ENCODE measurements at regions of chr7 and their contacts with region 1.

Region 1: GRCh38 chr7:50467817-50468610 is 17.9 kb upstream of the FIGNL1 start:
- ATAC-seq: peak; percentile 90 to 98 (median 92)
- H3K4me3 ChIP-seq: no peak overlapping the region
- H3K27ac ChIP-seq: no peak overlapping the region
- H3K4me1 ChIP-seq: no peaks in the 10 kb centered on the region

Region 2: GRCh38 chr7:50166997-50167965 is 300.7 kb before region 1 on chr7:
- in situ Hi-C with region 1: no loop called
- ATAC-seq: no peak
- H3K4me3 ChIP-seq: no peak overlapping the region
- H3K27ac ChIP-seq: no peak overlapping the region
- H3K4me1 ChIP-seq: no peaks in the 10 kb centered on the region

Region 3: DNA sequence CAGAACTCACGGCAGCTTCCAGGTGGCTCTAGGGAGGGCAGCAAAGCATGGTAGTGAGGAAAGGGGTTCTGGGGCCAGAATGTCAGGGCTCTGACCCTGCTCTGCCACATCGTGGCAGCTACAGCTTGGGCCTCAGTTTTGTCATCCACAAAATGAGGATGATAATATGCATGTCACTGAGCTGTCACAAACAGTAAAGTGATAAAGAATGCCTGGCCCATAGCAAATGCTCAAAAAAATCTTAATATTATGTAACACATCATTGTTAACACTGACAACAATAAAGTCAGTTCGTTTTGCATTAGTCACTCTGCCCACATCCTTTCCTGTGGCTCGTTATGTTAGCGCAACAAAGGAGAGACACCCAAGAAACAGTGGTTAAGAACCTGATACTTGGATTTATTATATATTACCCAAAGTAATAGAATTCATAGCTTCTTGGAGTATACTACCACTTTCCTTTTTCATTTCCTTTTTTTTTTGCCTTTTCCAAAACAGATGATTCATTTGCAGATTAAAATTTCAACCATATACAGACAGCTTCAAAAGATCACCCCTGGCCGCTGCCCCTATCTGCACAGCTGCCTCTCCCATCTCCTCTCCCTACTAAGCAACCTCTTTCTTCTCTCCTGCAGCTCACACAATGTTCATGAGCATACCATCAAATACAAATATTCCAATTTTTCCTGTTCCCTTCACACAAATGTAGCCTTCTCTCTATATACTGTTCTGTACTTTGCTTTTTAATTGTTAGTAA is 142.7 kb after region 1 on chr7:
- in situ Hi-C with region 1: loop called in 1 of 9 experiments (anchors 25 kb)
- ATAC-seq: no peak
- H3K4me3 ChIP-seq: no peak overlapping the region
- H3K27ac ChIP-seq: no peak overlapping the region
- H3K4me1 ChIP-seq: no peaks in the 10 kb centered on the region

Region 4: DNA sequence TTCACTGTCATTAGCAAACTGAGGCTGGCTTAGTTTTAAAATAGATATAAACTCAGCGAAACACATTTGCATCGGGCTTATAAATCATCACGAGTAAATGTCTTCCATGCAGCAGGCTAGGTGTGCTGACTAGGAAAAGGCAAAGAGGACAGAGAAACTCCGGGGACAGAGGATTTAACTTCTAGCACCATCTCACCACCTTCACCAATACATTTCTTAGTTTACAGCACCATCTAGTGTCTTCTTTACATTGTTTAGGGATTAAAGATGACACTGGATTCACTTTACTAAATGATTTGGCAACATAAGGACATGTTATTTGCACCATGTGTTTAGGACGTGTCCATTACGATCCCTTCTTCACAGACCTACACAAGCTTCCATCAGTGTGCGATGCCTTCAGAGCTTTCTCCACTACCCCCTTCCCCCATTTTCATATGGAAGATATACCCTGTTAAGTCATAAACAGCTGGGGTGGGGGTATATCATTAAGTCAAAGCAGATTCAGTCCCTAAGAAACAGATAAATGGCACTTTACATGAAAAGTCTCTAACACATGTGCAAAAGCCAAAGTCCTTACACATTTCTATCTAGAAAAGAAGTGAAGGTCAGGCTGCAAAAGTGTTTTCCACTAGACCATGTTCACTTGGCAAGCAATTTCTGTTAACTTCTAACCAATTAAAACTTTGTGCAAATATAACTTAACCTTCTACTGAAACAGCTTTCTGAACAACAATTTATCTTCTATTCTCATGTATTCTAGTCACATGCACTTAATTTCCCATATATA is 211.4 kb after region 1 on chr7:
- in situ Hi-C with region 1: loop called in 2 of 9 experiments (anchors 25 kb)
- ATAC-seq: peak; percentile 43 to 86 (median 64)
- H3K4me3 ChIP-seq: no peak overlapping the region
- H3K27ac ChIP-seq: no peak overlapping the region
- H3K4me1 ChIP-seq: peaks cover 7% of the 10 kb centered on the region in 2 donors

Region 5: DNA sequence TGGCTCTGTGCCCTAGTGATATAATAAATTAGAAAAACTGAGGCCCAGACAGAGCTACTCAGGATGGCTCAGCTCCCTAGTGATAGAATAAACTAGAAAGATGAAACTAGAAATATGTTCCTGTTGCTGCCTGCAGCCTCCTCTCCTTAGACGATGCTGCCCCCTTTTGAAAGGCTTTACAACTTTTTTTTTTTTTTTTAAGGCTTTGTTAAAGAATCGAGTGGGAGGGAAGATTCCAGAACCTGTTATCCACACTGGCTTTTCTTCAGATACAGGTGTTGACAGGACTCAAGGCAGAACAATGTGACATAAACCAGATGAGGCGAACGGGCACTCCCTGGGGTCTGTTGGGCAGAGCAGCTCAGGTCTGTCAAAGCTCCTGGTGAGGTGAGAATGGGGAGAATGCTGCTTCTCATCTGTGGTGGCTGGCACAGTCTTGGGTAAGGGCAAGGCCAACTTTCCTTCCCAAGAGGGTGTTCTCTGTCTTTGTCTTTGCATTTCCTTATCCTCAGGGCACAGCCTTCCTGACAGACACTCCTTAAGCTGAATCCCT is 673.5 kb after region 1 on chr7:
- in situ Hi-C with region 1: loop called in 3 of 9 experiments (anchors 25 kb)
- ATAC-seq: peak; percentile 21 to 72 (median 60)
- H3K4me3 ChIP-seq: no peak overlapping the region
- H3K27ac ChIP-seq: no peak overlapping the region
- H3K4me1 ChIP-seq: peaks cover 6 to 12% of the 10 kb centered on the region in 2 donors

Region 6: DNA sequence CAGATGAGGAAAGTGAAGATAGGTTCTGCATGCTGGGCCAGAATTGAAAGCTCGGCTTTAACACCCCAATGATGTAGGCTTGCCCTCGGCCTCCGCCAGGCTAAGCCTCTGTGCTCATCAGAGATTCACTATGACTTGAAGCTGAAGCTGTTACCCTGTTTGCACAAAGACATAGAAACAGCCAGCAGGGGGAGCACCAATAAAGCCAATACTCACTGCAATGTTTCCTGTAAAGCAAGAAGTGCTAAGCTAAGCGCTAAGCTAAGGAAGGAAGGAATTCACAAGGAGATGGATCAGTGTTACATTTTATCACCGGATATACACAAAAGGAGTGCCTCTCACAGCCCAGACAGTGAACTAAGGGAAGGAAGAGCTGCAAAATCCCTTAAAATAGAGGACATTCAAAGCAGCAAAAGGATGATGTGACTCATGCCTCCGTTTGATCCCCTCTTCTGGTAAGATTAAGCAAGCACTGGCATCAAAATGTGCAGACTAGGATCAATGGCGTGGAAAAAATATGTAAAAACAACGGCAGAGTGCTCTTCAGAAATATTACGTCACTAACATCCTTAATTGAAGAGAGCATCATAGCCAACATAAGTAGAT is 694.8 kb after region 1 on chr7:
- in situ Hi-C with region 1: loop called in 4 of 9 experiments (anchors 25 kb)
- ATAC-seq: peak; percentile 93 to 99 (median 97)
- H3K4me3 ChIP-seq: no peak overlapping the region
- H3K27ac ChIP-seq: peak overlapping the region in 1 of 2 donors; percentile 62
- H3K4me1 ChIP-seq: no peaks in the 10 kb centered on the region

Region 7: DNA sequence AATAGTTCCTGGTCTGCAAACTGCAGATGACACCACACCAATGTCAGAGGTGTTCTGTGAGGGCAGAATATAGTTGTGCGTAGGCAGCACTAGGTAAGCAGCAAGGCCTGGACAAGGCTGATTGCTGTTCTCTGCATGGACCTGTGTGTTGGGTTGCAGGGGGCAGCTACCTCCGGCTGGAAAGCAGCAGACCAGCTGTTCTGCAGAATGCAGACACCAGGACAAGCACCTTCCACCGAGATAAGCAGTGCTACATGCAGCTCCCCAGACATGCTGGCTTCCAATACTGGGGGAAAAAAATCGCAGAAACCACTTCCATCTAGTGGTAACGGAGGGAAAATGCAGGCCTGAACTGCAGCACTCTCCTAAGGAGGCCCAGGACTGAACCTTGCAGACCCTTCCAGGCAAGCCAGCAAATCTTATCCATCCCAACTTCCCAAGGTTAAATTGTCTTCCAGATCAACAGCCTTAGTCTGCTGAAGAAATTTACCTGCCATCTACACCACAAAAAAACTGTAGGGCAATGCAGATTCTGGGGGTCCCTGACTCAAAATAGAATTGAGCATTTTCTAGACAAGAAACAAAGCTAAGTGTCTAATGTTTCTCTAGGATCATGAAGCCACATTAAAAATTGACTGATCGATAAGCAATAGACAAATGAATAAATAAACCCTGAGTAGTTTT is 899.1 kb after region 1 on chr7:
- in situ Hi-C with region 1: loop called in 1 of 9 experiments (anchors 25 kb)
- ATAC-seq: peak; percentile 79 to 100 (median 98)
- H3K4me3 ChIP-seq: no peak overlapping the region
- H3K27ac ChIP-seq: no peak overlapping the region
- H3K4me1 ChIP-seq: no peaks in the 10 kb centered on the region